Endothelial cell of umbilical vein (primary cell): ENCODE measurements at regions of chr6 and their contacts with region 1.

Region 1: GRCh38 chr6:163449076-163449475 is 34.6 kb downstream of the QKI start:
- DNase-seq: peak; percentile 62
- H3K4me3 ChIP-seq: no peak overlapping the region
- H3K27ac ChIP-seq: no peak overlapping the region
- H3K4me1 ChIP-seq: no peaks in the 10 kb centered on the region
- H3K27me3 ChIP-seq: no peaks in the 10 kb centered on the region
- CTCF ChIP-seq: no peak
- POLR2A ChIP-seq: no peak

Region 2: DNA sequence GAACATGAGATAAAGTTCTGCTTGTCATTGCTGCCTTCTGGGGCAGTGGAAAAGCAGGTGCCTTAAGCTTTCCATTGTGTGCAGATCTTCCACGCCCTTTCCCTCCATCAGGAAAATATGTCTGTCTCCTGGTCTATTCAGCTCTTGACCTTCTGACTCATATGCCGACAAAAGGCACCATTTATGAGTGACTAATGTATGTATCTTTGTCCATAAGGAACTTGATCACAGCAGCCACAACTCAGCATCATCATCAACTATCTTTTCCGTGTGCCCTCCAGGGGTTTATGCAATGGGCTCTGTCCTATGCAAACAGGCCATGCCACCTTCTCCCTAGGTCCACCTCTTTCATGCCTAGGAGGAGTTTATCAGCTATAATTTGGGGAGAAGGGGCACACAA is 137.2 kb before region 1 on chr6:
- CTCF ChIA-PET with region 1: no interaction called
- POLR2A ChIA-PET with region 1: no interaction called
- dilution Hi-C with region 1: no loop called
- intact Hi-C with region 1: no loop called
- DNase-seq: peak; percentile 48
- H3K4me3 ChIP-seq: no peak overlapping the region
- H3K27ac ChIP-seq: no peak overlapping the region
- H3K4me1 ChIP-seq: peaks cover 25% of the 10 kb centered on the region
- H3K27me3 ChIP-seq: no peaks in the 10 kb centered on the region
- CTCF ChIP-seq: no peak
- POLR2A ChIP-seq: no peak

Region 3: DNA sequence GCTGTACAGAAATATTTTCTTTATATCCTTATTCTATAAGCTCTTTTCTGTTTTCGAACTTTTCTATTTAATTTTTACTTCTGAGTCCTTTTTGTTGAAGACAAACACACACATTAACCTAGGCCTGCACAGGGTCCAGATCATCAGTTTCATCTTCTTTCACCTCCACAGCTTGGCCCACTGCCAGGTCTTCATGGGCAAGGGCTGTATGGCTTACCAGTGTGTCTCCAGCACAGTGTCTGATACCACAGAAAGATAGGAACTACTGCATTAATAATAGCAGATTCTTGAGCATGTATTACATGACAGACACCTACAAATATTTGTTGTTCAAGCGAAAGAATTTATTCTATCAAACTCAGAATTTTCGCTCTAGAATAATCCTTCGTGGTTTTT is 10.1 kb before region 1 on chr6:
- CTCF ChIA-PET with region 1: interaction called, 12 read pairs
- POLR2A ChIA-PET with region 1: no interaction called
- dilution Hi-C with region 1: no loop called
- intact Hi-C with region 1: no loop called
- DNase-seq: no peak
- H3K4me3 ChIP-seq: no peak overlapping the region
- H3K27ac ChIP-seq: no peak overlapping the region
- H3K4me1 ChIP-seq: peaks cover 21% of the 10 kb centered on the region
- H3K27me3 ChIP-seq: no peaks in the 10 kb centered on the region
- CTCF ChIP-seq: no peak
- POLR2A ChIP-seq: no peak